ENCODE measurements at regions of chr11 and their contacts with region 1.

Region 1: DNA sequence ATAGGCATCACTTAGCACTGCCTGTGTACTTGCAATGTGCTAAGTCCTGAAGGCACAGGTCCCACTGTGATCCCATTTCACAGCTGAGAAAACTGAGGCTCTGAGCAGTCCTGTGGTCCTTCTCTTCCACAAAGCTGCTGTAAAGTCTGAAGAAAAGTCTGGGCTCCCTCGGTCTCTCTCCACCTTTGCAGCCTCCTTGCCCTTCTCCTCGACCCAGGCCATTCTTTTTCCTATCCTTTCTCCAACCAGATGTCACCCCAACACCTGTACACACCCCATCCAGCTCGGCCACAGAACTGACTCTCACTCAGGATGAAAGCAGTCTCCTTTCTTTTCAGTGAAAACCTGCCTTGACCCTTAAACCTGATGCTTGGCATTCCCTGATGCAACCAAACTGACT is 42.6 kb upstream of the SYT13 start:
- DNase-seq: no peak
- H3K4me3 ChIP-seq: no peak overlapping the region
- H3K27ac ChIP-seq: no peak overlapping the region
- H3K4me1 ChIP-seq: peaks cover 2% of the 10 kb centered on the region
- H3K27me3 ChIP-seq: peaks cover 27% of the 10 kb centered on the region
- CTCF ChIP-seq: no peak

Region 2: GRCh38 chr11:45110562-45110961 is 218.2 kb before region 1 on chr11:
- dilution Hi-C with region 1: loop called (anchors 5 kb)
- DNase-seq: peak; percentile 65
- H3K4me3 ChIP-seq: no peak overlapping the region
- H3K27ac ChIP-seq: no peak overlapping the region
- H3K4me1 ChIP-seq: peaks cover 5% of the 10 kb centered on the region
- H3K27me3 ChIP-seq: no peaks in the 10 kb centered on the region
- CTCF ChIP-seq: peak; percentile 65 to 77 (median 65)

Region 3: DNA sequence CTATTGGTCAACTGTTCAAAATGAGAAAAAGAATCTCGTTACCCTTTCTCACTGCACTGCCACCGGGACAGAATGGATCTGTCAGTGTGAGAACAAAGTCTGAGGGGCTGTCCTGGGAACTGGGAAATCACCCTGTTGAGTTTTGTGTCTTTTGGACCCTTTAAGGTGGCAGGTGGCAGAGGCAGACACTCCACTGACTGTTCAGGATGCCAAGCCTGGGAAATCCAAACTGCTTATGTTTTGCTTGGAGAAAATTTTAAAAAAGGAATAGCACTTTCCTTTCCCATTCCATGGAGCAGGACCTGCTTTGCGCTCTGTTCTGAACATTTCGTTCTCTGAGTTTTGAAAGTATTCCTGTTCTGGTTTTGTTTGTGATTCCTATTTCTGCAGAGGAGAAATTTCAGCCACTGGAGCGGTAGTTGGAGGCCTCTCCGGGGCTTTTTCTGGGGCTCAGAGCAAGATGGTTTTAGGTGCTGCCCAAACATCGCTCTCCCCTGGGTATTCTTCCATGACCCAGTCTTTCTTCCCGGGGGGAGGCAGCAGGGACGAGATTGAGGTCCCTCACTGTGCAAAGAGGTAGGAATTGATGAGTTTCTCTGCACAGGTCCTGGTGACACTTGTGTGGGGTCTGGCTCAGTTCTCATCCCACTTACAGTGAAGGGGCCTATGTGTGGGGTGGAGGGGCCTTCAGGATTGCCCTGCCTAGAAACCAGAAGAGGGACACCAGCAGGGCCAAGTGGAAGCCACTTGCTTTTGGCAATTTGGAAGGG is 95.9 kb after region 1 on chr11:
- dilution Hi-C with region 1: no loop called
- DNase-seq: no peak
- H3K4me3 ChIP-seq: no peak overlapping the region
- H3K27ac ChIP-seq: no peak overlapping the region
- H3K4me1 ChIP-seq: no peaks in the 10 kb centered on the region
- H3K27me3 ChIP-seq: no peaks in the 10 kb centered on the region
- CTCF ChIP-seq: no peak